ENCODE measurements at regions of chr1 and their contacts with region 1.

Region 1: GRCh38 chr1:158013840-158014730 is 20.6 kb downstream of the KIRREL1 start:
- DNase-seq: no peak
- H3K4me3 Mint-ChIP-seq: no peak overlapping the region
- H3K27ac Mint-ChIP-seq: peak overlapping the region; percentile 98
- H3K4me1 Mint-ChIP-seq: peaks cover 81% of the 10 kb centered on the region
- H3K27me3 Mint-ChIP-seq: no peaks in the 10 kb centered on the region
- CTCF ChIP-seq: no peak

Region 2: DNA sequence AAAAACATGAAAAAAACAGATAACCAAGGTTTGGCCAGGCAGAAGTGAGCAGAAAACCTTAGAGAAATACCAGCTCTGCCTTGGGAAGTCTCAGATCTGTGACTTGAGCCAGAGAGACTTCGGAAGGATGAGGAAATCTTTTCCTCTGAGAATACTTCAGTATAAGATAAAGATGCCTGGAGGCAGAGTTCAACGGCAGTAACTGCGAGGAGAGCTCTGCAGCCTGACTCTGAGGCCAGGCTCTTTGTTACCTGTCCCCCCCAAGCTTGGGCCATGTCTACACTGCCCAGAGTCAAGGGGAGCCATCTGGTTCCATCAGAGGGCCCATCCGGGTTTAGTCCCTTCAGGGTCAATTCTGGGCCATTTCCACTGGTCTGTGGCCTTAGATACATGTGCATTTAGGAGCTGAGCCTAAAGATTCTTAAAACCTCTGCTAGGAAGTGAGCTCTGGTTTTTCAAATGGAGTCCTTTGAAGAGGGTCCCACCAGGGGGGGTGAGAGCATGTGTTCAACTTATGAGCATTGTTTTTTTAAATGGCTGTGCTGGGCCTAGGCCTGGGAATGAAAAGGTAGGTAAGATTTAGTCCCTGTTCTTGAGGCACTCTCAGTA is 12.0 kb before region 1 on chr1:
- CTCF ChIA-PET with region 1: interaction called, 494 read pairs
- POLR2A ChIA-PET with region 1: interaction called, 245 read pairs
- intact Hi-C with region 1: loop called (anchors 1 kb)
- DNase-seq: peak; percentile 57
- H3K4me3 Mint-ChIP-seq: no peak overlapping the region
- H3K27ac Mint-ChIP-seq: peak overlapping the region; percentile 79
- H3K4me1 Mint-ChIP-seq: peaks cover 79% of the 10 kb centered on the region
- H3K27me3 Mint-ChIP-seq: no peaks in the 10 kb centered on the region
- CTCF ChIP-seq: no peak

Region 3: GRCh38 chr1:158028969-158029368 is 14.9 kb after region 1 on chr1:
- CTCF ChIA-PET with region 1: interaction called, 61 read pairs
- POLR2A ChIA-PET with region 1: interaction called, 245 read pairs
- intact Hi-C with region 1: no loop called
- DNase-seq: peak; percentile 72
- H3K4me3 Mint-ChIP-seq: no peak overlapping the region
- H3K27ac Mint-ChIP-seq: peak overlapping the region; percentile 63
- H3K4me1 Mint-ChIP-seq: peaks cover 42% of the 10 kb centered on the region
- H3K27me3 Mint-ChIP-seq: no peaks in the 10 kb centered on the region
- CTCF ChIP-seq: no peak